Vagina (tissue), 2 donors: ENCODE measurements at regions of chr13 and their contacts with region 1.

Region 1: DNA sequence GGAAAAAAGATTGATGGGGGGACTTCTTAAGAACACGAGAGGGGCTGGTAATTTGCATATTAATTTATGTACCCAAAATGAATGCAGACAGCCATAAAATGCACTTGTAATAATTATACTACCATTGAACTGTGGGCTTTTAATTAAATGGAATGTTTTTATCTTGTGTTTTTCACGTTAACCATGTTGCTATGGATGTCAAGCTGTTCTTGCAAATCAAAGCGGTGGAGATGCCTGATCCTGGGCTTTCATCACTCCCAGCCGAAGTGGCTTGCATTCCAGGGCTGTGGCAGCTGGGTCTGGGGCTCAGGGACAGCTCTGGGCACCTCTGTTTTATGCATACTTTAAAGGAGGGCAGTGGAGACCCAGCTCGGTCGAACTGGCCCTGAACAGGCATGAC is 179.4 kb upstream of the TMTC4 start:
- DNase-seq: no peak
- H3K4me3 ChIP-seq: no peak overlapping the region
- H3K27ac ChIP-seq: no peak overlapping the region
- H3K4me1 ChIP-seq: no peaks in the 10 kb centered on the region
- H3K27me3 ChIP-seq: no peaks in the 10 kb centered on the region
- CTCF ChIP-seq: no peak
- POLR2A ChIP-seq: no peak

Region 2: DNA sequence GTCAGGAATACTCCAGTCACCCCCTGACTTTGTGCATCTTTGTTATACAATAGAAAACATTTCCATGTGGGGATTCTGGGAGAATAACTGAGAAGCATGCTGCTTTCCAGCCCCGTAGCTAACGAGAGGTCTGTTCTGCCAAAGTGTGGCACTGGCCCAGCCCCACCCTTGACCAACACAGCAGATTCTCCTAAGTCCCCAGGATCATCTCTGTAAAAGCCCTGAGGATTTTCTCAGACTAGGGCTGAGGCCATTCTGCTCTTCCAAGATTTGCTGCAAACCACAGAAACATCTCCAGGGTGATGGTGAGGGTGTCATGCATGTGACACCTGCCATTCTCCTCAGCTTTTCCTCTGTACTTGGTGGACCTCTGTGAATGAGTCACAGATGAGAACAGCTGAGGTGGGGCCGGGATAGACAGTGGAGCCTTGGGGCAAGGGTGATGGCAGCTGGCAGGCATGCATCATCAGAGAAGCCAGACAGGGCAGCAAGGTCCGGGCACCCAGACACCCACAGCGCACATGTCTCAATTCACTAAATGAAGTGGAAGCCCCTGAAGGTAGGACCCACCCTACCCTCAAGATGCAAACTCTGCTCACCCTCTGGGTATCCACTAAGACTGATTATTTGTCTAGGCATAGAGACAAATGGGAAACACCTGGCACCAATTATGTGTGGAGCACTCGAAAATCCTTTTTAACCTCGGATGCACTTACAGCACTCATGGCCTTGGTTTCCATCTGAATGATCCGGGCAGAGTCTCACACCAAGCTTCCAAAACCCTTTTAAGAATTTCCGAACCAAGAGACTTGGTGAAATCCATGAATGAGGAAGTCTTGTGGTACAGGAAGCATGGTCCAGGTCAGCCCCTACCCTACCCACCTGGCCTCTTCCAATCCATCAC is 1856.0 kb before region 1 on chr13:
- intact Hi-C with region 1: no loop called
- DNase-seq: no peak
- H3K4me3 ChIP-seq: no peak overlapping the region
- H3K27ac ChIP-seq: peak overlapping the region; percentile 34
- H3K4me1 ChIP-seq: peaks cover 29% of the 10 kb centered on the region
- H3K27me3 ChIP-seq: no peaks in the 10 kb centered on the region
- CTCF ChIP-seq: no peak
- POLR2A ChIP-seq: no peak

Region 3: GRCh38 chr13:102255409-102255808 is 1401.4 kb after region 1 on chr13:
- intact Hi-C with region 1: loop called (anchors 5 kb)
- DNase-seq: no peak
- H3K4me3 ChIP-seq: no peak overlapping the region
- H3K27ac ChIP-seq: no peak overlapping the region
- H3K4me1 ChIP-seq: no peaks in the 10 kb centered on the region
- H3K27me3 ChIP-seq: no peaks in the 10 kb centered on the region
- CTCF ChIP-seq: no peak
- POLR2A ChIP-seq: no peak